Activated CD4-positive, alpha-beta T cell treated with anti-CD3 and anti-CD28 coated beads, Interleukin-2, amount 10 ng/mL, durations not matched to agents 24 days and 14 days (primary cell): ENCODE measurements at regions of chr10 and their contacts with region 1.

Region 1: DNA sequence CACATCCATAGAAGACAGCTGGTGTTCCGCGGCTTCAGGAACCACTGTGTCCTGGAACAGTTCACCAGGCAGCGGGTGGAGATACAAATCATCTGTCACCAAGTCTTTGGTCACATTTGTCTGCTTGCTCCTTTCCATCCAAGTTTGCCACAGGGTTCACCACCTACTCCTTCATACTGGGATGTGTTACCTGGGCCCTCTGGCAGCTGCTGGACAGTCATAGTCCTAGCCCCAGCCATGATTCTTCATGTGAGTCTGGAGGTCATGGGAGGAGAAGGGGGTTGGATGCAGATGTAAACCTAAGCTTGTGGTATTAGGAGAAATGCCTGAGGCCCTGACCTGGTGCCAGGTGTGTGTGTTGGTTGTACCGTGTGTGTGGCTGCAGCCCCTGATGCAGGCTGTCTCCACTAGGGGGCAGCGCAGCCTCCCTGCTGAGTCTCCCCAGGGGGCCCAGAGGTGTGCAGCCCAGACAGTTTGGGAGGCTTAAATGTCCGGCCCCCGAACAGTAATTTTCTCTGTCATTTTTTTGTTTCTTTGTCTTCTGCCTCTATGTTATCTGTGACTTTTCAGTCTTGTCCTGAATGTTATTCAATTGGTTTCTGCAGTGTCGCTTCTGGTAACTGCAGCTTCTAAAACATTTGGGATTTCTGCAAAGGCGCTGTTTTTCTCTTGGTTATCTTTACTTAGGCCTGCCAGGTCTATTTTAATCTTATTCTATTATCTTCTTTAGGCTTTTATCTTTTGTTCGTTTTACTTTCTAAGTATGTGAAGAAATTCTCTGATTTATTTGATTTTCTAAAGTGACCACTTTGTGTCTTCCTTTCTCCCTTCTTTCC is 14.8 kb downstream of the NPS start:
- DNase-seq: peak; percentile 74
- H3K4me3 Mint-ChIP-seq: no peak overlapping the region
- H3K27ac Mint-ChIP-seq: no peak overlapping the region
- H3K4me1 Mint-ChIP-seq: no peaks in the 10 kb centered on the region
- H3K27me3 Mint-ChIP-seq: no peaks in the 10 kb centered on the region

Region 2: DNA sequence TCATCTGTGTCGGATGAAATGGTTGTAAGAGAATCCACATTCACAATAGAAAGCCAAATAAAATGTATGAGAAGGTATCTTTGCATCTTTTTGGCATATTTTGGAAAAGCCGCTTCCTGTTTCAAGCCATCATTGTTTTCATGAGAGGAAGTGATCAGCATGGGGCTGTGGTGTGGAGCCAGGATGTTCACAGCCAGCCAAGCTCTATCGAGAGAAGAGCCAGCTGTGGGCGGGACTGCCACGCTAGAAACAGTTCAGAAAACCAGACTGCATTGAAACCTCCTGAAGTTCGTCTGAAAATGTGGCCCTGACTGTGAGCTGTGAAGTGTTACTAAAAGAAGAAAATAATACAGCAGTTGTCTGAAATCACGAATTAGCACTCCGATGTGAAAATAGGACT is 36.0 kb before region 1 on chr10:
- intact Hi-C with region 1: no loop called
- DNase-seq: no peak
- H3K4me3 Mint-ChIP-seq: no peak overlapping the region
- H3K27ac Mint-ChIP-seq: no peak overlapping the region
- H3K4me1 Mint-ChIP-seq: no peaks in the 10 kb centered on the region
- H3K27me3 Mint-ChIP-seq: no peaks in the 10 kb centered on the region

Region 3: DNA sequence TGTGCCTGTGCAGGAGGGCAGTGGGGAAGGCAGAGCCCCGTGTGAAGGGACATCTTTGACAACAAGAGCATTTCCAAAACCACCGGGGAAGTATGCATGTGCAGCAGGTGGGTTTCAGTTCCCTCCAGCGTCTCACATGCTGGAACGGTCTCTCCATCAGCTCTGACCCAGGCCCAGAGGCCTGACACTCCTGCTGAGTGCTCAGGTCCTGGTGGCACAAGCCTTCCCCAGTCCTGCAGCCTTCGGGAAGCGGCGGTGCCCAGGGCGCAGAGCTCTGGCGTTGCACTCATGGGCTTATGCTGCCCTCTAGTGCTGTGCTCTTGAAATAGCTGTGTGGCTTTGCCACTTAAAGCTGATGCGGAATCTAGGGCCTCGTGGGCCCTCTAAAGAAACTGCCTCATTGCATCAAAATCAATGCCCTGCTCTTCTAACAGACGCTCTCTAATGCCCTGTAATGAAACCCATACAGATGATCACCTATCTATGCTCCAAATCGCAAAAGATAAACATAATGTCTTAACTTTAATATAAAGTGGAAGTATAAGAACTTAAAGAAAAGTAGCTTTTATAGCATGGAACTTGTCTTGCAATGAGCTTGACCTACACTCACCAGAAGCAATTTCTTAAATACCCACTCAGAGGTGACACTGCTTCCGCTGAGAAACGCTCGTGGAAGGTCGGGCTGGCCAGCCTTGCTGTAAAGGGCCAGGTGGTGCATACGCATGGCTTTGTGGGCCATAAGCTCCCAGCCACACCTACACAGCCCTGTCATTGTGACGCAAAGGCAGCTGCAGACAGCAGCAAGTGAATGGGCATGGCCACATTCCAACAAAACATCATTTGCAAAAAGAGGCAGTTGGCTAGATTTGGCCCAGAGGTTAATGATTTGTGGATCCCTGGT is 290.2 kb after region 1 on chr10:
- intact Hi-C with region 1: loop called (anchors 10 kb)
- DNase-seq: peak; percentile 80
- H3K4me3 Mint-ChIP-seq: no peak overlapping the region
- H3K27ac Mint-ChIP-seq: no peak overlapping the region
- H3K4me1 Mint-ChIP-seq: no peaks in the 10 kb centered on the region
- H3K27me3 Mint-ChIP-seq: no peaks in the 10 kb centered on the region